Uterus (tissue), 4 donors: ENCODE measurements at regions of chr22 and their contacts with region 1.

Region 1: DNA sequence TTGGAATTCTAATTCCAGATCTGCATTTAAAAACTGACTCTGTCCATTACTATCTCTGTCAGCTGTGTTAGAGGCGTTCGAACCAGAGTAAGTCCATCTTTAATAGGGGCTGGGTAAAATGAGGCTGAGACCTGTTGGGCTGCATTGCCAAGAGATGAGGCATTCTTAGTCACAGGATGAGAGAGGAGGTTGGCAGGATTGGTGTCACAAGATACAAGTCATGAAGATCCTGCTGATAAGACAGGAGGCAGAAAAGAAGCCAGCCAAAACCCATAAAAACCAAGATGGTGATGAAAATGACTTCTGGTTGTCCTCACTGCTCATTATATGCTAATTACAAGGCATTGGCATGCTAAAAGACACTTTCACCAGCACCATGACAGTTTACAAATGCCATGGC is 356.3 kb upstream of the ISX start:
- DNase-seq: no peak
- H3K4me3 ChIP-seq: no peak overlapping the region
- H3K27ac ChIP-seq: no peak overlapping the region
- H3K4me1 ChIP-seq: no peaks in the 10 kb centered on the region
- H3K27me3 ChIP-seq: no peaks in the 10 kb centered on the region
- CTCF ChIP-seq: no peak
- POLR2A ChIP-seq: no peak

Region 2: DNA sequence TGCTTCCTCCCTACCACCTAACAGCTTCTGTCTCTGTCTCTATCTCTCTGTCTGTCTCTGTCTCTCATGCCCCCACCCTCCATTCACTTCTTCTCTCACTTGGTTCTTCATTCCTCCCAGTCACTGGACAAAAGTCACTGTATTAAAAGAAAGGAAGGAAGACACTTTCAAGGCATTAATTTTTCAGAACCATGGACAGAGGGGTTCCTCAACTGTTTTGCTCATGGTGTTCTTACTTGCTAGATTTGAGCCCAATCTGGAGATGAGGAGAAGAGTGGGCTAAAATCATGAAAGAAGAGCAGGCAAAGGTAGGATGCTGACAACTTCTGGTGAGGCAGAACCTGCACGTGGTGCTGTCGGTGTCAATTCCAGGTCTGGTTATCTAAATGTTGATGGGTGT is 672.7 kb before region 1 on chr22:
- intact Hi-C with region 1: loop called (anchors 10 kb)
- DNase-seq: no peak
- H3K4me3 ChIP-seq: no peak overlapping the region
- H3K27ac ChIP-seq: no peak overlapping the region
- H3K4me1 ChIP-seq: no peaks in the 10 kb centered on the region
- H3K27me3 ChIP-seq: no peaks in the 10 kb centered on the region
- CTCF ChIP-seq: no peak
- POLR2A ChIP-seq: no peak